Activated CD8-positive, alpha-beta T cell treated with anti-CD3 and anti-CD28 coated beads, Interleukin-2, amount 10 ng/mL, durations not matched to agents 7 days and 5 days (primary cell): ENCODE measurements at regions of chr17 and their contacts with region 1.

Region 1: DNA sequence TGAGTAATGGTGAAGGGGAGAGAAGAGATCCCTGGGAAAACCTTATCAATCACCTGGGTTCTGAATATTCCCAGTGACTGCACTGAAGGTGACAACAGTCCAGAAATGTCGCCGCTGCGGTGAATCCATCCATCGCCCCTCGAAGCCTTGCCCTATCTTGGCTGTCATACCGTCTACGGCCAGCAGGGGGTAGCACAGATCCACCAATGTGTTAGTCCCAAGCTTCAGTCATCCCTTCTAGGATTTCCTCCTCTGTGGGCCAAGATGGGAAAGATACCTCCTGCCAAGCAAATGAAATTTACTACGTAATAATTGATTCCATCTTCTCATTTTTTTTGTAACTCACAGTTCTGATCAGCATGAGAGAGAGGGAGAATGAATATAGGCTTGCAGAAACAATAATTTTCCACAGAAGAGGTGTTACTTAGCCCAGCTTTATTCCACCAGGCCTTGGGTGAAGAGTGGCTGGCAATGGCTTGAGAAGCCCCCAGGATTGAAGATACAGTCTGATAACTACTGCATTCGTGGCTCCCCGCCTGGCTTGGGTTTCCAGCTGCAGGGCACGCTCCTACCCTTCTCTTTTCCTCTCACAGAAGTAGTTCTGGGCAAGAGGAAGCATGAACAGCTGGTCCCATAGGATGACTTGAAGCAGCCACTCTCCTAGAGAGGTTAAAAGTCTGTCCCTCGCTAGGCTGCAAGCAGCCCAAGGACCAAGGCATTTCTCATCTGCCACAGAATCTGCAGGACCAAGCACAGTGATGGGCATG is 2.6 kb upstream of the FMNL1 start:
- DNase-seq: peak; percentile 89
- ATAC-seq: no peak
- H3K4me3 Mint-ChIP-seq: peak overlapping the region; percentile 80
- H3K27ac Mint-ChIP-seq: peak overlapping the region; percentile 86
- H3K4me1 Mint-ChIP-seq: peaks cover 37% of the 10 kb centered on the region
- H3K27me3 Mint-ChIP-seq: no peaks in the 10 kb centered on the region

Region 2: DNA sequence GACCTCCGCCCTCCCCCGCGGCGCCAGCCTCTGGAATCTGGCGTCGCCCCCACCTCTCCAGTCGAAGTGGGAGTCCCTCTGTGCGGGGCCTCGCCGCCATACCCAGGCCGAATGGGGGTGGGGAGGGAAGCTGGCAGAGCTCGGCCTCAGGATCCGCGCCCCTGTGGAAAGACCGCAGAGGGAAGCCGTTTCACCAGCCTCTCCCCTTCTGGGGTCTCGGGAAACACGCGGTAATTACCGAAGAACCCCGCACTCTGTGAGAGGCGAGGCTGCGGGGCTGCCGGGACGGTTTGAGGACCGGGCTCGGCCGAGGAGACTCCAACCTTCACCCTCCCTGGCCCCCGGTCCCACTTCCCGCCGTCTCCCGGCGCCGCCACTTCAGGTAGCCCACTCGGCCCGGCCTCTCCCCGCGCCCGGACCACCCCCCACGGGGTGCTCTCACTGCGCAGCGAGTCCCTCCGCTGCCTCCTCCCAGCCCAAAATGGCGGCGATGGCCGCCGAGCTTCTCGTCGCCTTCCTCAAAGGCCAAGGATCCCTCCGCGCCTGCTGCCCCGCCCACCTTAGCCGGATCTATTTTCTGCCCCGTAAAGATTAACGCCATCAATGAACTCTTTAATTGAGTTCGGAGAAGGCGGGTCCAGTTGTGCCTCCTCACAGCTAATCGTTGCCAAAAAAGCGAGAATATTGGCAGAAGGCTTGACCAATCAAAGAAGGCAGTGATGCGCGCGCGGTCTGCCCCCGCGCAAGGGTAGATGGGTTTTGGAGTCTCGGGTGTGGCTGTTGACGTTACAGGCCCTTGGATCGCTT is 57.9 kb before region 1 on chr17:
- CTCF ChIA-PET with region 1: interaction called, 11 read pairs
- POLR2A ChIA-PET with region 1: interaction called, 5 read pairs
- DNase-seq: peak; percentile 99
- ATAC-seq: peak; percentile 98
- H3K4me3 Mint-ChIP-seq: peak overlapping the region; percentile 99
- H3K27ac Mint-ChIP-seq: peak overlapping the region; percentile 98
- H3K4me1 Mint-ChIP-seq: peaks cover 43% of the 10 kb centered on the region
- H3K27me3 Mint-ChIP-seq: no peaks in the 10 kb centered on the region

Region 3: GRCh38 chr17:45241328-45242011 is 22.4 kb after region 1 on chr17:
- CTCF ChIA-PET with region 1: interaction called, 410 read pairs
- POLR2A ChIA-PET with region 1: interaction called, 132 read pairs
- DNase-seq: no peak
- ATAC-seq: no peak
- H3K4me3 Mint-ChIP-seq: no peak overlapping the region
- H3K27ac Mint-ChIP-seq: no peak overlapping the region
- H3K4me1 Mint-ChIP-seq: peaks cover 48% of the 10 kb centered on the region
- H3K27me3 Mint-ChIP-seq: no peaks in the 10 kb centered on the region

Region 4: GRCh38 chr17:45261577-45262515 is 42.8 kb after region 1 on chr17 and contains the start of gene SPATA32:
- CTCF ChIA-PET with region 1: interaction called, 55 read pairs
- POLR2A ChIA-PET with region 1: interaction called, 6 read pairs
- DNase-seq: peak; percentile 85
- ATAC-seq: peak; percentile 88
- H3K4me3 Mint-ChIP-seq: peak within 1 kb of the TSS; percentile 80
- H3K27ac Mint-ChIP-seq: peak within 1 kb of the TSS; percentile 91
- H3K4me1 Mint-ChIP-seq: peaks cover 37% of the 10 kb centered on the region
- H3K27me3 Mint-ChIP-seq: no peaks in the 10 kb centered on the region
- total RNA-seq, gene SPATA32: 0.52 to 0.55 TPM

Region 5: DNA sequence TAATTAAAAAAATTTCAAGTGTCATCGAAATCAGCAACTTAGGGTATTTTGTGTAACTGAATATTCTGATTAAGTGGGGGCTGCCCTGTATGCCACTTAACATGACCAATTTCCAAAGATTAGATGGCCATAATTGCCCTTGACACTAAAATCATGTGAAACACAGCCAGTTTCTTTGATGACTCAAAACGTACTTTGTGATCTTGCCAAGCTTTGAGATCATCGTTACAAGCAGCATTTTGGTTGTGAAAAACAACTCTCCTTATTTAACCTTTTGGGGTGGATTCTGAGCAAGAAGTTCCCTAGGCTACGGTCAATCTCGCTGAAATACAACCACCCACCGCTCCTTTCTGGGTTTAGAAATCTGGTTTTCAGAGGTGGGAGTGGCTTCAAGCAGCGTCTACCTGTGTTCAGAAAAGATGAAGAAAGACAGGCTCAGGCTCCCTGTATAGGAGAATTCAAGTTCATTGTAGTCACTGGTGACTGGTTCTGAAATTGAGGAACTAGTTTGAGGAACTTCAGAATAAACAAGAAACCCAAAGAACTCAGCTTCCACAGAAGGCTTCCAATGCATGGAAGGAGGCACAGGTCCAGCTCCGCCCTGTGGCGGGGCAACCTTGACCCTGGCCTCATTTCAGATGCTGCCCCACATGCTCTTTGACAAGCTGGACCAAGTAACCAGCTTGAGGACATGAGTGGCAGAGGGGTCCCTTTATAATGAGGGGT is 88.4 kb after region 1 on chr17:
- CTCF ChIA-PET with region 1: interaction called, 86 read pairs
- POLR2A ChIA-PET with region 1: interaction called, 17 read pairs
- DNase-seq: peak; percentile 56
- ATAC-seq: peak; percentile 30
- H3K4me3 Mint-ChIP-seq: no peak overlapping the region
- H3K27ac Mint-ChIP-seq: peak overlapping the region; percentile 82
- H3K4me1 Mint-ChIP-seq: peaks cover 82% of the 10 kb centered on the region
- H3K27me3 Mint-ChIP-seq: no peaks in the 10 kb centered on the region

Region 6: DNA sequence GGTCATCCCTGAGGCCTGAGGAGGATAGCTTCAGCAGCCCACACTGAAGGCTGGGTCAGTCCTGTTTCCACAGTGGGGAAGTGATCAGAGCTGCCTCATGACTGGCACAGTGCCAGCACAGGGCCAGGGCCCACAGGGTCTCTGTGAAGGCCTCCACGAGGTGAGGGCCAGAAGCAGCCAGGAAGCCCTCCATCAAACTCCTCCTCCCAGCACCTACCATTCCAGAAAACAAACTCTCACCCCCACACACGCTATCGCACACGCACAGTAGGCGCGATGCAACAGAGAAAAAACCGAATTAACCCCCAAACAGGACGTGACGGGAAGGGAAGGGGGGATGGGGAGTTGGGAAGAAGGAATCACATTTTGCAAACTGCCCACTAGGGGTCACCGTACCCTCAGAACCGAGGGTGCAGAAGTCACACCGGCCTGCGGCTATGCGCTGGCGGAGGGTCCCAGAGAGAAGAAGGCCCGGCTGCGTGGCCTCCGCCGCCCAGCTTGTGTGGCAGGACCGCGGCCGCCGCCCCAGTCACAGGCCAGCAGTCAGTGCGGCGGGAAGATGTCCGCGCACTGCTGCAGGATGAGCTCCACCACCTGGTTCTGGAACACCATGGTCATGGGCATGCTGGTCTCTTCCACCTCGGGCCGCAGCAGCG is 176.0 kb after region 1 on chr17:
- CTCF ChIA-PET with region 1: interaction called, 27 read pairs
- POLR2A ChIA-PET with region 1: interaction called, 3 read pairs
- DNase-seq: peak; percentile 52
- ATAC-seq: peak; percentile 46
- H3K4me3 Mint-ChIP-seq: no peak overlapping the region
- H3K27ac Mint-ChIP-seq: no peak overlapping the region
- H3K4me1 Mint-ChIP-seq: peaks cover 8% of the 10 kb centered on the region
- H3K27me3 Mint-ChIP-seq: peaks cover 6% of the 10 kb centered on the region

Region 7: GRCh38 chr17:45441528-45442310 is 222.6 kb after region 1 on chr17:
- CTCF ChIA-PET with region 1: no interaction called
- POLR2A ChIA-PET with region 1: no interaction called
- DNase-seq: no peak
- ATAC-seq: no peak
- H3K4me3 Mint-ChIP-seq: no peak overlapping the region
- H3K27ac Mint-ChIP-seq: peak overlapping the region; percentile 15
- H3K4me1 Mint-ChIP-seq: peaks cover 41% of the 10 kb centered on the region
- H3K27me3 Mint-ChIP-seq: no peaks in the 10 kb centered on the region